Endothelial cell of umbilical vein (primary cell): ENCODE measurements at regions of chr2 and their contacts with region 1.

Region 1: GRCh38 chr2:46296840-46297545 is at the start of gene EPAS1:
- DNase-seq: peak; percentile 93
- H3K4me3 ChIP-seq: peak within 1 kb of the TSS; percentile 64 to 86 (median 66)
- H3K27ac ChIP-seq: peak within 1 kb of the TSS; percentile 81
- H3K4me1 ChIP-seq: peaks cover 23% of the 10 kb centered on the region
- H3K27me3 ChIP-seq: no peaks in the 10 kb centered on the region
- CTCF ChIP-seq: no peak
- POLR2A ChIP-seq: peak; percentile 97
- total RNA-seq, gene EPAS1: 374 and 397 TPM in 2 replicates

Region 2: GRCh38 chr2:46029332-46029811 is 267.6 kb before region 1 on chr2:
- CTCF ChIA-PET with region 1: interaction called, 12 read pairs
- POLR2A ChIA-PET with region 1: interaction called, 6 read pairs
- dilution Hi-C with region 1: no loop called
- intact Hi-C with region 1: no loop called
- DNase-seq: peak; percentile 96
- H3K4me3 ChIP-seq: no peak overlapping the region
- H3K27ac ChIP-seq: peak overlapping the region; percentile 77
- H3K4me1 ChIP-seq: peaks cover 20% of the 10 kb centered on the region
- H3K27me3 ChIP-seq: no peaks in the 10 kb centered on the region
- CTCF ChIP-seq: peak; percentile 32 to 47
- POLR2A ChIP-seq: no peak

Region 3: GRCh38 chr2:46117379-46117778 is 179.6 kb before region 1 on chr2:
- CTCF ChIA-PET with region 1: interaction called, 3 read pairs
- POLR2A ChIA-PET with region 1: interaction called, 3 read pairs
- dilution Hi-C with region 1: no loop called
- intact Hi-C with region 1: loop called (anchors 1 kb)
- DNase-seq: peak; percentile 52
- H3K4me3 ChIP-seq: no peak overlapping the region
- H3K27ac ChIP-seq: peak overlapping the region; percentile 78
- H3K4me1 ChIP-seq: peaks cover 51% of the 10 kb centered on the region
- H3K27me3 ChIP-seq: no peaks in the 10 kb centered on the region
- CTCF ChIP-seq: no peak
- POLR2A ChIP-seq: no peak

Region 4: DNA sequence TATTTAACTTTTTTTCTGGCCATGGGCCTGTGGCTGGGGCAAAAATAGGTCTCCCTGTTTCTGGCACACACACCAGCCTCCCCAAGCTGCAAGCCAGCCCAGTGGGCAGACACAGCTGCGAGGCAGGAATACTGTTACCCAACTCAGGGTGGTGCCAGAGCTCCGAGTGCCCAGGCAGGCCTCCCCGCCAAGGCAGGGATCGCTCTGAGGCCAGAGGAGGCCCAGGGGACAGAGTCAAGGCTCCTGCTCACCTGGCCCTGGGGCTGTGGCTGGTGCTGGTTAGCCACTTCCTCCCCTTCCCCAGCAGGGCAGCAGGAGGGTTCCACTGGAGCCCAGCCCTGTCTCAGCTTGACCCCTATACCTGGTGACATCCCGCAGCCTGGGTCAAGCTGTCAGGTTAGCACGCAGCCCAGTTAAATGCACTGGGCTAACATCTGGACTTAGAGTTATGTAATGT is 66.8 kb before region 1 on chr2:
- CTCF ChIA-PET with region 1: interaction called, 14 read pairs
- POLR2A ChIA-PET with region 1: interaction called, 4 read pairs
- dilution Hi-C with region 1: no loop called
- intact Hi-C with region 1: no loop called
- DNase-seq: no peak
- H3K4me3 ChIP-seq: no peak overlapping the region
- H3K27ac ChIP-seq: no peak overlapping the region
- H3K4me1 ChIP-seq: peaks cover 13% of the 10 kb centered on the region
- H3K27me3 ChIP-seq: no peaks in the 10 kb centered on the region
- CTCF ChIP-seq: no peak
- POLR2A ChIP-seq: no peak

Region 5: DNA sequence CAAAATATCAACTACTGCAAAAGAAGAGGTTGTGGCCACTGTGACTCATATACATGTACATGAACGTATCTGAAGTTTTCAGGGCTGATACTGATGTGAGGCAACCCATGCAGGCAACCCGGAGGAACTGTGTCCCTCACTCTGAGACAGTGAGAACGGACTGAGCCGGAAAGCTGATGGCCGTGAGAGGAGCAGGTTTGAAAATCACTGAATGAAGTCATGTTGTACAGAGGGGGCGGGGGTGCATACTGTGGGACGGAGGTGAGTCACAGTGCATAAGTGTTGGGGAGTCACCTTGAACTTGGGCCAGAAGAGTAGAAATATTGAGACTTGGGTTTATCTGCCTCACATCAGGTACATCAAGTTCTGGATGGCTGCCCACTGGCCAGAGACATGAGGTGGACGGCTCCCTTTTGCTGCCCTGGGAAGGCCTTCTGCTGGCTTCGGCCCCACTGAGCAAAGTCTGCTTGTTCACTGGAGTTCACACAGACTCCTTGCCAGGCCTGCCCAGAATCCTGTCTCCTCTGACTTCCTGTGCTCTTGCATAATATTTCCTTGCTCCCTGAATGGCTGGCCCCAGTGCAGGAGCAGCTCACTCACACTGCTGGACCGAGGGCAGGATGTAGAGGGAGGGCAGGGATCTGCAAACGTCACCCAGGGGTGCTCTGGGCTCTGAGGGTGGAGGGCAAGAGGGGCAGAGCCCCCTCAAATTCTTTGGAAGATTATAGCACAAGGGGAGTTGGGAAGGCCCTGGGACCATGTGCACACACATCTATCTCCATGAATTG is 18.3 kb after region 1 on chr2:
- CTCF ChIA-PET with region 1: interaction called, 4 read pairs
- POLR2A ChIA-PET with region 1: interaction called, 9 read pairs
- dilution Hi-C with region 1: no loop called
- intact Hi-C with region 1: loop called (anchors 1 kb)
- DNase-seq: peak; percentile 97
- H3K4me3 ChIP-seq: no peak overlapping the region
- H3K27ac ChIP-seq: peak overlapping the region; percentile 80
- H3K4me1 ChIP-seq: peaks cover 44% of the 10 kb centered on the region
- H3K27me3 ChIP-seq: no peaks in the 10 kb centered on the region
- CTCF ChIP-seq: no peak
- POLR2A ChIP-seq: peak; percentile 69

Region 6: DNA sequence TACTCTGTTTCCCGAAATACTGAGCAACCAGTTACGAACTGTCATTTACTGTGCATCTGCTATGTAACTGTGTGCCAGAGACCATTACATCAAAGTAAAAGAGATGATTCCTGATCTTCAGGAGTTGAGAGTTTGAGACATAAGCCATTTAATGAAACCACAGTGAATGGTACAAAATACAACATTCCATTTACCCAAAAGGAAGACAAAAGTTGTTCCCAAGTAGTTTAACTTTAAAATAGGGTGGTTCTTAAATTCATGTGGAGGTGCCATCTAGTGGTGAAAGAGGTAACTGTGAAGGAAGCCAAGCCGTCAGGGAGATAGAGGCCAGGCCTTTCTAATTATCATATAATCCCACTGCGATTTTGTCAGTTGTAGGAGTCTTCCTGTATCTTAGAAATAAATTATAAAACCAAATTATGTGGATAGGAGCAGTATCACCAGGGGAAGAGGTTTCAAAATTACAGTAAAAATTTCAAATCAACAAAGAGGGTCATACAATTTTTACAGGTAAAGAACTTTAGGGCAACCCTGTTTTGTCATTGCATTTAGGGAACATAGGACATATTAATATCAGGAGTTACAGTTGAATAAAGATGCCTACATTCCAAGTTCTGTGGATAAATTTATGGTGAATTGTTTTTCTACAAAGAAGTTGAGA is 67.9 kb after region 1 on chr2:
- CTCF ChIA-PET with region 1: interaction called, 12 read pairs
- POLR2A ChIA-PET with region 1: interaction called, 3 read pairs
- dilution Hi-C with region 1: no loop called
- intact Hi-C with region 1: loop called (anchors 1 kb)
- DNase-seq: peak; percentile 70
- H3K4me3 ChIP-seq: no peak overlapping the region
- H3K27ac ChIP-seq: no peak overlapping the region
- H3K4me1 ChIP-seq: peaks cover 24% of the 10 kb centered on the region
- H3K27me3 ChIP-seq: no peaks in the 10 kb centered on the region
- CTCF ChIP-seq: peak; percentile 61 to 63
- POLR2A ChIP-seq: no peak